ENCODE measurements at regions of chr13 and their contacts with region 1.

Region 1: GRCh38 chr13:46641274-46642081 is 88.5 kb downstream of the LRCH1 start:
- DNase-seq: no peak
- ATAC-seq: peak; percentile 60

Region 2: DNA sequence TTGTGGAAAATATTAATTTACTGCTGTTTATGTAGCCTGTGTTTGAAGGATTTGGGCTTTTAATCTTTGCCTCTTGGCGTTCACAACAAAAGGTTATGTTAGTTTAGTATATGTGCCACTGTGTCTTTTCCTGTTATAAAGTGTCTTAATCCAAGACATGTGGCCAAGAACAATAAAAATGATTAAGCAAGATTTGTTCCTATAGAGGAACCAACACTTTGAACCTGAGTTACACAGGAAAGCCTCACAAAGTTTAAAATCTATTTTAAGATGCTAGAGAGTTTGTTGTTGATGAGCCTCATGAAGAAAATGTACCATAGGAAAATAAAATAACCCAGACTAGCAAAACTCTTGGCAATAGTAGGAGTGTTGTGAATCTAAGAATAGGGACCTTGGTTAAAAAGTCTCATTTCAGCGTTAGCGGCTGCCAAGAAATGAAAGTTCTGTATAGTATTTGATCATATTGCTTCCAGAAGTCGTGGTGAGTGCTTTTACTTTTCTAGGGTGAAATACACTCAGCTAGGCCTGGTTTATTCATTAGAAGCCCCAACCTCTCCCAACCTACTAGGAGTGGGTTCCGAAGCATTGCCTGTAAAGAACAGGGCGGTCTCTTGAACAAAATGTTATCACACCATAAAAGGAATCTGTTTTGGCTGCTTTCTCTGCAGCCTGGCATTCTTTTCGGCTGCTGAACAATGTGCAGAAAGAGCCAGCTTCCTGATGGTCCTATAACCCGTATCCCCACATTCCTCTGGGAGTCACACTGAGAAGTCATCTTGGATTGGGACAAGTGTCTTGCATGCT is 14.1 kb after region 1 on chr13:
- intact Hi-C with region 1: loop called (anchors 2 kb)
- DNase-seq: no peak
- ATAC-seq: peak; percentile 73